ENCODE measurements at regions of chr1 and their contacts with region 1.

Region 1: DNA sequence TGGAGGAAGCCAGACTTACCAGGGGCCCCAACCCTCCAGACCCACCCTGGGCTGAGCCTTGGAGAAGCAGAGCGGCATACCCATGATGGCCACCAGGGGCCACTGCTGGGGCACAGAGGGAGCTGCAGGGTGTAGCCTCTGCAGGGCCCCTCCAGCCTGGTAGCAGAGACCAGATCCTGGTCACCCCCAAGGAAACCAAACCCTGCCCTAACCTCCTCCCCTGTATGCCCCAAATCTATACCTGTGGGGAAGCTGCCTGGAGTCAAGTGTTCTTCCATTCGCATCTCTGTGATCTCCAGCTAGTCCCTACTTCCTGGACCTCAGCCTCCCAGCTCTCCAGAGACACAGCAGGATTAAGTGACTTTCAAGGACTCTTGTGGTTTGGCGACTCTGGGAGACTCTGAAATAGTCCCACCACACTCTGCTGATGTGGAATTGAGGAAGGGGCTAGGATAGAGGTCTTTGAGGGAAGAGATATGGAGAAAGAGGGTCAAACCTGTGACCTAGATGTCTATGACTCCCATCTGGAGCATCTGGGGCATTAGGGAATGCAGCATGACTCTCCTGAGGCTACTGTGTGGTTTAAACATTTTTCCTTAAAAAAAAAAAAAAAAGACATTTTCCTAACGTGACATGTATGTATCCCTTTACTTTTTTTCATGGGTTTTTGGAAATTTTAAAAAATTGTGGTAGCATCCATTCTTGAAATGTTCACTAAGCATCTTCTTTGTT is 119.2 kb upstream of the IPO9 start:
- DNase-seq: peak; percentile 36 to 58
- ATAC-seq: peak in 1 of 2 donors; percentile 31
- H3K4me3 ChIP-seq: no peak overlapping the region
- H3K27ac ChIP-seq: peak overlapping the region in 2 of 4 donors; percentile 1 to 39
- H3K4me1 ChIP-seq: peaks cover 38 to 42% of the 10 kb centered on the region in 2 donors
- H3K27me3 ChIP-seq: no peaks in the 10 kb centered on the region
- CTCF ChIP-seq: peak; percentile 89 to 96 (median 93)
- POLR2A ChIP-seq: no peak

Region 2: DNA sequence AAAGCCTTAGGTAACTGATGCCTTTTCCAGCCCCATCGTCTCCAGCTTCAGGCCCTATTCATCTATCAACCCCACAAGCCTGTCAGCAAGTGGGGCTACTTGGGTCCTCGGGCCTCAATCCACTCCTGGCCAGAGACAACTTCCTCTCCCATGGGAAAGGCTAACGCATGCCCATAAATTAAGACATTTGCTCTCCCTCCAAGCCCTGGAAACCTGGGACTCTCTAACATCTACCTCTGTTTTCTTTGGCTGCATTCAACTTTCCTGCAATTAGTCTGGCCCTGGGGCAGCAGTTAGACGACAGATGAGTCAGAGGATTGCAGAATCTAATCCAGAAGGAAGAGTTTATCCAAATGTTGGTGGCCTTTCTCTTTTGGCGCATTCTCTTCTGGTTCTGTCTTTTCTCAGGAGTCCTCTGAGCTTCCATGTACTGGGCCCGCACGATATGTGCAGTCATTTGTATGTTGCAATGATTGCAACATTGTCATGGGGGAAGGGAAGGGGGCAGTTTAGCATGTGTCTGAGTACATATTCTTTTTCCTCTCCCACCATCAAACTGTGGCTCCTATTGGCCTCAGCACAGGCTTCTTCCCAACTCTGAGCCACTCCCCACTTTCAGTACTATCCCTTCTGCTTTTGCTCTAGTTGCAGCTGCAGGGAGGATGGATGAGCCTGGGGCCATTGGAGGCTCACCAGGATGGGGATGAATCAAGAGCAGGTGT is 116.4 kb before region 1 on chr1:
- in situ Hi-C with region 1: no loop called
- intact Hi-C with region 1: no loop called
- DNase-seq: peak; percentile 35 to 76
- ATAC-seq: peak; percentile 81 to 87
- H3K4me3 ChIP-seq: no peak overlapping the region
- H3K27ac ChIP-seq: peak overlapping the region in 2 of 4 donors; percentile 43 to 49
- H3K4me1 ChIP-seq: peaks cover 7 to 10% of the 10 kb centered on the region in 2 donors
- H3K27me3 ChIP-seq: no peaks in the 10 kb centered on the region
- CTCF ChIP-seq: no peak
- POLR2A ChIP-seq: no peak

Region 3: GRCh38 chr1:201614262-201615015 is 95.3 kb before region 1 on chr1:
- in situ Hi-C with region 1: no loop called
- intact Hi-C with region 1: no loop called
- DNase-seq: no peak
- ATAC-seq: no peak
- H3K4me3 ChIP-seq: no peak overlapping the region
- H3K27ac ChIP-seq: no peak overlapping the region
- H3K4me1 ChIP-seq: peaks cover 12% of the 10 kb centered on the region in 2 donors
- H3K27me3 ChIP-seq: no peaks in the 10 kb centered on the region
- CTCF ChIP-seq: no peak
- POLR2A ChIP-seq: no peak

Region 4: GRCh38 chr1:201783572-201783971 is 73.8 kb after region 1 on chr1:
- in situ Hi-C with region 1: loop called (anchors 5 to 10 kb)
- intact Hi-C with region 1: no loop called
- DNase-seq: no peak
- ATAC-seq: no peak
- H3K4me3 ChIP-seq: no peak overlapping the region
- H3K27ac ChIP-seq: no peak overlapping the region
- H3K4me1 ChIP-seq: peaks cover 0 to 3% of the 10 kb centered on the region in 2 donors
- H3K27me3 ChIP-seq: no peaks in the 10 kb centered on the region
- CTCF ChIP-seq: no peak
- POLR2A ChIP-seq: no peak

Region 5: GRCh38 chr1:201792534-201793305 is 83.0 kb after region 1 on chr1:
- in situ Hi-C with region 1: loop called (anchors 5 to 10 kb)
- intact Hi-C with region 1: loop called (anchors 1 kb)
- DNase-seq: peak; percentile 52 to 73
- ATAC-seq: peak; percentile 93 to 94
- H3K4me3 ChIP-seq: no peak overlapping the region
- H3K27ac ChIP-seq: peak overlapping the region; percentile 49 to 73 (median 66)
- H3K4me1 ChIP-seq: peaks cover 30 to 38% of the 10 kb centered on the region in 2 donors
- H3K27me3 ChIP-seq: no peaks in the 10 kb centered on the region
- CTCF ChIP-seq: peak; percentile 93 to 97 (median 95)
- POLR2A ChIP-seq: no peak

Region 6: DNA sequence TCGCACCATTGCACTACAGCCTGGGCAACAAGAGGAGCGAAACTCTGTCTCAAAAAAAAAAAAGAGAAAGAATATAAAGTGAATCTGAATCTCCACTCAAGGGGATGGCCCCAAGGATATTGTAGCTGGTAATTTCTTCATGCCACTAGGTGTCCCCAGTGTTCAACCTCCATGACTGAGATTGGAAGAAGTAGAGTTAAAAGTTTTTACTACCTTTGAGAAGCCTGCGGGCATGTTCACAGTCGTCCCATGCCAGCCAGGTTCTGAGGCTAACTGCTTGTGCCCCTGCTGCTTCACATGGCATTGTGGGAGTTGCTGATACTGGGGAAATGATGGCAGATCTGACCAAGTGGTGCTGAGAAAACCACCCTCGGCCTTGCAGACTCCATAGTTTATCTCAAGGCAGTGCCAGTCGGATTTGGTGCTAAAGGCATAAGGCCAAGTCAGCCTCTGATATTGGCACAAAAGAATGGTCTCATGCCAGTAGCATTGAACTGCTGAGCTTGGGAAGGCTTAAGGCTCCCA is 168.2 kb after region 1 on chr1:
- in situ Hi-C with region 1: no loop called
- intact Hi-C with region 1: loop called (anchors 5 kb)
- DNase-seq: peak in 1 of 2 donors; percentile 70
- ATAC-seq: peak; percentile 58 to 74
- H3K4me3 ChIP-seq: no peak overlapping the region
- H3K27ac ChIP-seq: peak overlapping the region; percentile 78 to 90 (median 84)
- H3K4me1 ChIP-seq: peaks cover 38 to 52% of the 10 kb centered on the region in 2 donors
- H3K27me3 ChIP-seq: no peaks in the 10 kb centered on the region
- CTCF ChIP-seq: peak; percentile 48 to 79 (median 65)
- POLR2A ChIP-seq: no peak

Measured in gastrocnemius medialis (tissue), 4 donors.